Mucosa of descending colon (tissue), 3 donors: ENCODE measurements at regions of chr9 and their contacts with region 1.

Region 1: GRCh38 chr9:33813712-33814641 is 3.0 kb upstream of the UBE2R2 start:
- DNase-seq: peak in 1 of 3 donors; percentile 35
- ATAC-seq: no peak
- H3K4me3 ChIP-seq: no peak overlapping the region
- H3K4me1 ChIP-seq: peaks cover 19% of the 10 kb centered on the region
- CTCF ChIP-seq: peak; percentile 59

Region 2: GRCh38 chr9:33676746-33677505 is 137.1 kb before region 1 on chr9:
- intact Hi-C with region 1: no loop called
- DNase-seq: peak; percentile 18 to 41 (median 31)
- ATAC-seq: peak; percentile 66
- H3K4me3 ChIP-seq: peak overlapping the region; percentile 14
- H3K4me1 ChIP-seq: peaks cover 3% of the 10 kb centered on the region
- CTCF ChIP-seq: no peak

Region 3: DNA sequence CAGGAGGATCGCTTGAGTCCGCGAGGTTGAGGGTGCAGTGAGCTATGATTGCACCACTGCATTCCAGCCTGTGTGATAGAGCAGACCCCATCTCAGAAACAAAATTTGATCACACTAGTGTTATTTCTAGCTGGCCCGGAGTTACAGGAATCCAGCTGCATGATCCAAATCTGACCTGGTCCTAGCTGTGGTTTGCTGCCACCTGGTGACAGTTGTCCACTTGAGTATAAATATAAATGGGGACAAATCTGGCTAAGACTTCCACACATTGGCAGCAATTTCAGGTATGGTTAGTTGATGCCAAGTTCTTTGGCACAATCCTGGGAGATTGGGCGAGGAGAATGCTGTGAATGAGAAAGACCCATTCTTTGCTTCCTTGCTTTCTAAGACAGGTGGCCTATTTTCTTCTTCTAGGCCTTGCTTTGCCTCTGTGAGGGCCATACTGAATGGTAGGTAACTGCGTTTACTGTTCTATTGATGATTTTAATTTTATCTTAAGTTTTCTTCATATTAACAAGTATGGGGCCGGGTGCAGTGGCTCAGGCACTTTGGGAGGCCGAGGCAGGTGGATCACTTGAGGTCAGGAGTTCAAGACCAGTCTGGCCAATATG is 38.3 kb after region 1 on chr9:
- intact Hi-C with region 1: loop called in 1 of 2 experiments (anchors 5 kb)
- DNase-seq: peak in 2 of 3 donors; percentile 72 to 94
- ATAC-seq: peak; percentile 87
- H3K4me3 ChIP-seq: no peak overlapping the region
- H3K4me1 ChIP-seq: peaks cover 21% of the 10 kb centered on the region
- CTCF ChIP-seq: peak; percentile 34

Region 4: DNA sequence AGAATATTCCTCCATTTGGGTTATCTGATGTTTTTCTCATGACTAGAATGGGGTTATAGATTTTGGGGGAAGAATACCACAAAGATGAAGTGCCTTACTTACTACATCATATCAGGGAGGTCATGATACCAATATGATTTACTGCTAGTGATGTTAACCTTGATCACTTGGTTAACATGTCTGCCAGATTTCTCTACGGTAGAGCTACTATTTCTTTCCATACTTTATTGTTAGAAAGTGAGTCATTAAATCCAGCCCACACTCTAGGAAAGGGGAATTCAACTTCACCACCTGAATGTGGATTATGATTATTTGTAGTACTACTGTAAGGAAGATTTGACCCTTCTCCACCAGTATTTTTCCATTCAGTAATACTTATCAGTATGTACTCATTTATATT is 67.7 kb after region 1 on chr9:
- intact Hi-C with region 1: no loop called
- DNase-seq: no peak
- ATAC-seq: no peak
- H3K4me3 ChIP-seq: no peak overlapping the region
- H3K4me1 ChIP-seq: peaks cover 15% of the 10 kb centered on the region
- CTCF ChIP-seq: no peak

Region 5: GRCh38 chr9:33964086-33964768 is 150.2 kb after region 1 on chr9:
- intact Hi-C with region 1: no loop called
- DNase-seq: no peak
- ATAC-seq: no peak
- H3K4me3 ChIP-seq: no peak overlapping the region
- H3K4me1 ChIP-seq: no peaks in the 10 kb centered on the region
- CTCF ChIP-seq: no peak